ENCODE measurements at regions of chr11 and their contacts with region 1.

Region 1: GRCh38 chr11:134866981-134867675 is 455.1 kb upstream of the B3GAT1 start:
- DNase-seq: no peak
- H3K4me3 Mint-ChIP-seq: no peak overlapping the region
- H3K27ac Mint-ChIP-seq: no peak overlapping the region
- H3K4me1 Mint-ChIP-seq: no peaks in the 10 kb centered on the region
- H3K27me3 Mint-ChIP-seq: no peaks in the 10 kb centered on the region
- CTCF ChIP-seq: no peak

Region 2: GRCh38 chr11:134360050-134360835 is 506.9 kb before region 1 on chr11:
- CTCF ChIA-PET with region 1: interaction called, 4 read pairs
- POLR2A ChIA-PET with region 1: no interaction called
- intact Hi-C with region 1: loop called (anchors 5 kb)
- DNase-seq: peak; percentile 80
- H3K4me3 Mint-ChIP-seq: no peak overlapping the region
- H3K27ac Mint-ChIP-seq: no peak overlapping the region
- H3K4me1 Mint-ChIP-seq: peaks cover 5% of the 10 kb centered on the region
- H3K27me3 Mint-ChIP-seq: no peaks in the 10 kb centered on the region
- CTCF ChIP-seq: peak; percentile 93

Region 3: DNA sequence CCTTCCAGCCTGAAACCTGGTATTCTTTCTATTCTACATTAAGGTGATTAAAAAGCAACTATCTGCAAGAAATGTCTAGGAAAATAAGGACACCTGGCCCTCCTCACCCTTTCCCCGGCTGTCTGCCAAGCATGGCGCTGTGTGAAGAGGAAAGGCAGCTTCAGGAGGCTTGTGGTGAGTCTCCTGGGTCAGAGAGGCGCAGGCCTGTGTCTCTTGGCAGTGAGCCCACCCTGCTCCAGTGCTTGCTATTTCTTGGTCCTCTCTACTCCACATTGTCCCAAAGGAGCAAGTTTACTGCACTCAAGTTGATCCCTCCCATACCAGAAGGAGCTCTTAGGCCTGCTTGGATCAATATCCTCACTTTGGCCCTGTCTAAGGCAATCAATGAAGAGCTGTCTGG is 65.6 kb after region 1 on chr11:
- CTCF ChIA-PET with region 1: no interaction called
- POLR2A ChIA-PET with region 1: no interaction called
- intact Hi-C with region 1: no loop called
- DNase-seq: peak; percentile 21
- H3K4me3 Mint-ChIP-seq: no peak overlapping the region
- H3K27ac Mint-ChIP-seq: no peak overlapping the region
- H3K4me1 Mint-ChIP-seq: no peaks in the 10 kb centered on the region
- H3K27me3 Mint-ChIP-seq: no peaks in the 10 kb centered on the region
- CTCF ChIP-seq: no peak

Region 4: DNA sequence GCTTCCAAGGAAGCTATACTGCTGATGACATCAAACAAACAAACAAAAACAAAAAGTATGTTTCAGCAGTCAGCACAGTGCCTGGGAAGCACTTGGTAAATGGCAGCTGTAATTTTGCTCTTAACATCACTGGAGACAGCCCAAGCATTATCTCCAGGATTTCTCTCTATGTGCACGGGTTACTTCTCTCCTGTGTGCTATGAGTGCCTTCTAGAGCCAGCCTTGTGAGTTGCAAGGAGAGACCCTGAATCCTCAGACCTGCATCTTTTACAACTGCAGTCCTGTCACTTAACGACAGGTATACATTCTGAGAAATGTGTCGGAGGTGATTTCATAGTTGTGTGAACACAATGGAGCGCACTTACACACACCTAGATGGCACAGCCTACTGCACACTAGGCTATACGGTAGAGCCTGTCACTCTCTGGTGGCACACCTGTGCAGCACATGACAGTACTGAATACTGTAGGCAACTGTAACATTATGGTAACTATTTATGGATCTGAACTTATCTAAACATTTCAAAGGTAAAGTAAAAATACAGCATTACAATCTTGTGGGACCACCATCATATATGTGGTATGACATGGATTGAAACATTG is 207.4 kb after region 1 on chr11:
- CTCF ChIA-PET with region 1: interaction called, 15 read pairs
- POLR2A ChIA-PET with region 1: interaction called, 3 read pairs
- intact Hi-C with region 1: no loop called
- DNase-seq: peak; percentile 47
- H3K4me3 Mint-ChIP-seq: no peak overlapping the region
- H3K27ac Mint-ChIP-seq: no peak overlapping the region
- H3K4me1 Mint-ChIP-seq: peaks cover 12% of the 10 kb centered on the region
- H3K27me3 Mint-ChIP-seq: no peaks in the 10 kb centered on the region
- CTCF ChIP-seq: peak; percentile 33